PC-9 (cell line): ENCODE measurements at regions of chr3 and their contacts with region 1.

Region 1: DNA sequence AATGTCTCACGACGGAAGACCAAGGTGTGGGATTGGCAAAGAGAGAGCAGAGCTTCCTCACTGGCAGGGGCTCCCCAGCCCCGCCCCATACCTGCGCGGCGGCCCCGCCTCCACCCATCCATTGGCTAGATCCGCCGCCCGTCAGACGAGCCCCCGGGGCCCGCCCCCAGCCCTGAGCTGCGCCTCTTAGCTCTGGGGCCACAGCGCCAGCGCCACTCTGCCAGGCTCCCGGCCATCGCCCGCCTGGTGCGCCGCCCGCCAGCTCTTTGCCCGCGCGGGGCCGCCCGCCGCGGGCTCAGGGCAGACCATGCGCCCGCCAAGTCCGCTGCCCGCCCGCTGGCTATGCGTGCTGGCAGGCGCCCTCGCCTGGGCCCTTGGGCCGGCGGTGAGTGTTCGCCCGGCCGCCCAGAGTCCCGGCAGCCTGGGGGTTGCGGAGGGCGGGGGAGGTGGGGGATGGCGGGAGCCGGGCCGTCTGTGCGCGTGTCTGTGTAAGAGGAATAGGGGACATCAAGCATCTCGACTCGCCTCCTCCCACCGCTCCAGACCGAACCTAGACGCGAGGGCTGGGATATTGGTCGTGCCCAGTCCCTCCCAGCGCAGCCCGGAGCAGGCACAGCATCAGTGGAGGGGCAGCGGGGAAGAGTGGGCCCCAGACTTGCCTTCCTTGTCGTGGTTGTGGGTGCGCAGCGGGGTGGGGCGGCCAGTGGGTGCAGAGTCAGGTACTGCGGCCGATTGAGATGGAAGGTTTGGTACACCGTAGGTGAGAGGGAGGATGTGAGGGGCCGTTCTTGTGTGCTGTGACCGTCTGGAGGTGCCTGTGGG is at the start of gene VIPR1:
- DNase-seq: peak; percentile 77 to 96
- H3K4me3 ChIP-seq: peak within 1 kb of the TSS; percentile 64
- H3K27ac ChIP-seq: no peak within 1 kb of the TSS
- H3K4me1 ChIP-seq: peaks cover 38% of the 10 kb centered on the region
- H3K27me3 ChIP-seq: no peaks in the 10 kb centered on the region
- CTCF ChIP-seq: no peak
- total RNA-seq, gene VIPR1: 19.7 and 23.9 TPM in 2 replicates

Region 2: DNA sequence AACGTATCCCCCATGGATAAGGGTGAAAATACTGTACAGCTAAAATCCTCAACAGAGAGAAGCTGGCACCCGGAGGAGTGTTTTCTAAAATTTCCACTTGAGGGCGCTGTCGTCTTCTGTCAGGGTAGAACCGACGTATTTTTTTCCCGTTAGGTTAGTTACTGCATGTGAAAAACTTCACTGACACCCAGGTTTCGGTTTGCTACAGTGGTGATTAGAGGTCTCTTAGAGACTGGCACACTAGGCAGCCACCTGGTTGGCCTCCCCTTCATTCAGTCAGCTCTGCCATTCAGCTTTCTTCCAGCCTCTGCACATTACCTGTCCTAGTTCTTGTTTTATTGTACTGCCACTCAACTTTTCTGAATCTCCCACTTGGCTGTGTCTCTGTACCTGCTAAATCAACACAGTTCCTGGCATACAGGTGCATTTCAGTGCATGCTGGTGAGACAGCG is 255.0 kb before region 1 on chr3:
- CTCF ChIA-PET with region 1: interaction called, 10 read pairs
- POLR2A ChIA-PET with region 1: no interaction called
- intact Hi-C with region 1: no loop called
- DNase-seq: peak; percentile 53 to 64
- H3K4me3 ChIP-seq: no peak overlapping the region
- H3K27ac ChIP-seq: no peak overlapping the region
- H3K4me1 ChIP-seq: no peaks in the 10 kb centered on the region
- H3K27me3 ChIP-seq: 0 out of 2 replicates have a peak, but pooled peaks cover 7% of the 10 kb centered on the region
- CTCF ChIP-seq: peak; percentile 86

Region 3: DNA sequence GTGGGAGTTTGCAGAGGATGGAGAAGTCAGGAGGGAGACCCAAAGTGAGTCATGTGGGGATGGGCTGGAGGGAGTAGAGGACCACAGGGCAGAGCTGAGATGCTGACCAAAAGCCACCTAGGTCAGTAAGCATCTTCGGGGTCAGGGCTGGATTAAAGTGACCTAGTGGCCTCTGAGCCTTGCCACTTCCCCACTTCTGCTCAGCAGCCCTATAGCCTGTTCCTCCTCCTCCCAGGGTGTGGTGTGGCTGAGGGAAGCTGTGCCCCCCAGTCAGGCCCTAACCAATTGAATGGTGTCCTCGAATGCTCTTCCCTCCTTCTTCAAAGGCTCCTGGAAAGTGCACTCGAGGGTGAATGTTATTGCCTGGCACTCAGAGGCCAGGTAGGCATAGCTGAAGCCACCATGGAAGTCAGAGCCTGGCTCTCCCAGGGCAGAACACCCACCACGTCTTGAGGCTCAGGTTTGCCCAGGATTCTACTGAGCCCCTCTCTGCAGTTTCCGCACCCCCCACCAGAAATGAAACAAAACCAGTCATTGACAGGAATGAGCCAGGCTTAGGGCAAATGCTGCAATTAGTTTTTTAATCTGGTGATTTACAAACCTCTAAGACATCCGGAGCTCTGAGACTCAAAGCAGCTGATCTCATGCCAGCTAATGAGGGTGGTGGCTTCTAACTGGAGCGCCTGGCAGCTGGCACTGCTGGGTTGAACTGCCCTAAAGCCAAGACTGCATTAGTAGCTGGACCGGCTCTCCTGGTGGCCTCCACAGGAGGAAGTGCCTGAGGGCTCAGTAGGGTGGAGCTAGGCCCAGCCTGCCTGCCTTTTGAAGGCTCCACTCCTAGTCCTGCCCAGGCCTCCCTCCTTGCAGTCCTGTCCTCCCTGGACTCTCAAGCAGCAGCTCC is 26.2 kb before region 1 on chr3:
- CTCF ChIA-PET with region 1: interaction called, 6 read pairs
- POLR2A ChIA-PET with region 1: interaction called, 7 read pairs
- intact Hi-C with region 1: loop called (anchors 1 kb)
- DNase-seq: peak; percentile 93 to 97
- H3K4me3 ChIP-seq: no peak overlapping the region
- H3K27ac ChIP-seq: peak overlapping the region; percentile 86
- H3K4me1 ChIP-seq: peaks cover 62% of the 10 kb centered on the region
- H3K27me3 ChIP-seq: no peaks in the 10 kb centered on the region
- CTCF ChIP-seq: no peak

Region 4: GRCh38 chr3:42518800-42519567 is 16.3 kb after region 1 on chr3:
- CTCF ChIA-PET with region 1: no interaction called
- POLR2A ChIA-PET with region 1: interaction called, 13 read pairs
- intact Hi-C with region 1: no loop called
- DNase-seq: no peak
- H3K4me3 ChIP-seq: no peak overlapping the region
- H3K27ac ChIP-seq: no peak overlapping the region
- H3K4me1 ChIP-seq: no peaks in the 10 kb centered on the region
- H3K27me3 ChIP-seq: no peaks in the 10 kb centered on the region
- CTCF ChIP-seq: no peak

Region 5: DNA sequence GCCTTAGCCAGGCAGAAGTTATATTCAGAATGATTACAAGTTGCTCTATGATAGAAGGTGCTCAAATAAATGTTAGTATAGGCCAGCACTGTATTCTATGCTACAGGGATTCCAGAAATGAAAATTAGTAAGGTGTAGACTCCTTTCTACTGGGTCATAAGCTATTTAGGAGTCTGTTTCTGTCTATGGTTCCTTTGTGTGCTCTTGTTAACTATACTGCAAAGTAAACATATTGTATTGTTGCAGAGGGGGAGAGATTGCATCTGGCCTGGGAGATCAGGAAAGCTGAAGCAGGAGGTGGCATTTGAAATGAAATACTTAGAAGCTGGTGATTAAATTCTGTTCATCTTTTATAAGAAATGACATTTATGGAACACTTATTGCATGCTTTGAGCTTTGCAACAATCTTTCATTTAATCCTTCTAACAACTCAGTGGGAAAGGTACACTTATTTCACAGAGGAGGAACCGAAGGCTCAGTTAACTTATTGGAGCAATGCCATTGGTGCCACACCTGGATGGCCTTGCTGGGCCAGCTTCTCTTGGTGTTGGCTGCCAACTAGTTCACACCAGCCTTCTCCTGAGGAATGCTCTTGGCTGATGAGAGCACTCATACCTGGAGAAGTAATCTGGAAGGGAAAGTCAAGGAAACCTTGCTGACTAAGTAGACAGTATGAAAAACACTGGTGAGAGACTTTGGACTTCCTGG is 1227.2 kb after region 1 on chr3:
- CTCF ChIA-PET with region 1: no interaction called
- POLR2A ChIA-PET with region 1: interaction called, 30 read pairs
- intact Hi-C with region 1: no loop called
- DNase-seq: peak; percentile 41 to 67
- H3K4me3 ChIP-seq: no peak overlapping the region
- H3K27ac ChIP-seq: no peak overlapping the region
- H3K4me1 ChIP-seq: no peaks in the 10 kb centered on the region
- H3K27me3 ChIP-seq: no peaks in the 10 kb centered on the region
- CTCF ChIP-seq: no peak